PC-3 (cell line): ENCODE measurements at regions of chr16 and their contacts with region 1.

Region 1: DNA sequence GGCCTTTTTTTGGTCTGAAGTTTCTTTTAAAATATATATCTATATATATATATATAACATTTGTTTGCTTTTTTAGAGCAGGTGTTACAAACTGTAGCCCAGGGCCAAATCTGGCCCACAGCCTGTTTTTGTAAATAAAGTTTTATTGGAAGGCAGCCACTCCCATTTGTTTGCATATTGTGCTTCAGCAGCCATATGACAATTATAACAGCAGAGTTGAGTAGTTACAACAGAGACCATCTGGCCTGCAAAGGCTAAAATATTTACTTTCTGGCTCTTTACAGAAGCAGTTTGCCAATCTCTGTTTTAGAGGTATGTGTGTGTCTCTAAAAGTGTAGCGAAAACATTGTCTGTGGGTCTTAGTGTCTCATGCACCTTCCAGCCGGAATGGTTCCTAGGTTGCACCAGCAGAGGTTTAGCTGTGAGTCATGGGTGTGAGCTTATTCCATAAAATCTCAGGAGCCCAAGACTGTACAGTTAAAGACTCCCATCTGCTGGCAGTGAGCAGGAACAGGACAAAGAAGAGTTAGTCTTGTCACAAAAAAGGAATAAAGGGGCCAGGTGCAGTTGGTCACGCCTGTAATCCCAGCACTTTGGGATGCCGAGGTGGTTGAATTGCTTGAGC is 23.8 kb downstream of the LCMT1 start:
- DNase-seq: peak; percentile 78
- ATAC-seq: peak; percentile 98
- H3K4me3 ChIP-seq: no peak overlapping the region
- H3K27ac ChIP-seq: 0 out of 2 replicates have a peak overlapping the region, but pooled peaks have one; percentile 19
- H3K4me1 ChIP-seq: no peaks in the 10 kb centered on the region
- H3K27me3 ChIP-seq: no peaks in the 10 kb centered on the region
- CTCF ChIP-seq: peak; percentile 67

Region 2: DNA sequence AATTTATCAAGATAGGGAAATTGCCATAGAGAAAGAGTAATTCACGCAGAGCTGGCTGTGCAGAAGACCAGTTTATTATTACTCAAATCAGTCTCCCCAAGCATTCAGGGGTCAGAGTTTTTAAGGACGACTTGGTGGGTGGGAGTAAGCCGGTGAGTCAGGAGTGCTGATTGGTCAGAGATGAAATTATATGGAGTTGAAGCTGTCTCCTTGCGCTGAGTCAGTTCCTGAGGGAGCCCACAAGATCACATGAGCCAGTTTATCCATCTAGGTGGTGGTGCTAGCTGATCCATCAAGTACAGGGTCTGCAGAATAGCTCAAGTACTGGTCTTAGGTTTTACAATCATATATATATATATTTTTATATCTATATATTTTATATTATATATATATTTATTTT is 75.4 kb after region 1 on chr16:
- CTCF ChIA-PET with region 1: no interaction called
- POLR2A ChIA-PET with region 1: no interaction called
- intact Hi-C with region 1: no loop called
- DNase-seq: peak; percentile 50
- ATAC-seq: peak; percentile 51; the same call in 1 of the 2 replicates
- H3K4me3 ChIP-seq: no peak overlapping the region
- H3K27ac ChIP-seq: no peak overlapping the region
- H3K4me1 ChIP-seq: no peaks in the 10 kb centered on the region
- H3K27me3 ChIP-seq: no peaks in the 10 kb centered on the region
- CTCF ChIP-seq: no peak

Region 3: DNA sequence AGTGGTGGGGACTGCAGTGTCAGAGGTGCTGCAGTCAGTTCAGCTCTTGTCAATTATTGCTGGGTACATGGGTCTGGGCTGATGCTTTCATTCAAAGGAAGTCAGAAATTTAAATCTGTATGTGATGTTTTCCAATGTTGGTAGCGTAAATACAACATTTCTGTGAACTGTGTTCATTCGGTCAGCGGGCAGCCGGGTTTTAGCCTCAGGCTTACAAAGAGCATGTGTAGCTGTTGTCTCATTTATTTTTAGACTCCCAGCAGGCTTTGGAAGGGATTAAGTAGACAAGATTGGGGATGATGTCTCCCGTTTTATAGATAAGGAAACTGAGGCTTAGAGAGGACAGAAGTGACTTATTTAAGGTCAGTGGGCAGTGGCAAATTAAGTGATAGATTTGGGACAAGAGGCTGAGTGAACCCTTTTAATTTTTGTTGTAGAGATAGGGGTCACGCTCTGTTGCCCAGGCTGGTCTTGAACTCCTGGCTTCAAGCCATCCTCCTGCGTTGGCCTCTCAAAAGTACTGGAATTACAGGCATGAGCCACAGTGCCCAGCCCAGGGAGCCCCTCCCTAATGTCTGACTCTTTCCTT is 89.5 kb after region 1 on chr16:
- CTCF ChIA-PET with region 1: interaction called, 11 read pairs
- POLR2A ChIA-PET with region 1: no interaction called
- intact Hi-C with region 1: no loop called
- DNase-seq: no peak
- ATAC-seq: no peak
- H3K4me3 ChIP-seq: no peak overlapping the region
- H3K27ac ChIP-seq: no peak overlapping the region
- H3K4me1 ChIP-seq: no peaks in the 10 kb centered on the region
- H3K27me3 ChIP-seq: no peaks in the 10 kb centered on the region
- CTCF ChIP-seq: no peak

Region 4: DNA sequence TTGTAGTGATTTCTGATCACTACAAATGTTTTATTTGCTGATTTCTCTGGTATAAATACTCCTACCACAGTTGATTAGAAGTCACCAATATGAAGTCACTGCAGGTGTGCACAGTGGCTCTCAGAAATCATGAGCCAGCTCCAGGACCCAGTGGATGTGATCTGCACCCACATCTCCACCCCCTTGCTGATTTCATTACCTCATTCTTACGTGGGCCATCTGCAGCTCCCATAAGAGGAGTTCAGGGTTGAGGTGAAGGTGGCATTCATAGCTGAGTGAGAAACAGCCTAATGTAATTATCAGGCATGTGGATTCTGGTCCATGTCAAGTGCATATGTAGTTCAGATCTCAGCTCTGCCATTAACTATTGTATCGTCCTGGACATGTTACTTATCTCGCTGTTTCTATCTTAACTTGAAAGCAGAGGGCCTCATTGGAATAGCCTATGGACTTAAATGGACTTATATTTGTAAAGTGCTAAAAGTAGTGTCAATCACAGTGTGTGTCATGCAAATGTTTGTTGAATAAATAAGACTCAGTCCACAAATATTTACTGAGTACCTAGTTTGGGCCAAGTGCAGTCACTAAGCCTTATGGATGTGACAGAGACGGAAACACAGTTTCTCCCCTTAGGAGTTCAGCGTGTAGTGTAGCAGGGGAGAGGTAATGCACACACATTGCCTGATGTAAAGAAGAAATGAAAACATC is 163.0 kb after region 1 on chr16:
- CTCF ChIA-PET with region 1: no interaction called
- POLR2A ChIA-PET with region 1: no interaction called
- intact Hi-C with region 1: no loop called
- DNase-seq: peak; percentile 51
- ATAC-seq: peak; percentile 96
- H3K4me3 ChIP-seq: no peak overlapping the region
- H3K27ac ChIP-seq: no peak overlapping the region
- H3K4me1 ChIP-seq: peaks cover 7% of the 10 kb centered on the region
- H3K27me3 ChIP-seq: no peaks in the 10 kb centered on the region
- CTCF ChIP-seq: no peak